Aorta (tissue), 5 donors: ENCODE measurements at regions of chr3 and their contacts with region 1.

Region 1: GRCh38 chr3:57169872-57170623 is 4.9 kb upstream of the IL17RD start:
- DNase-seq: peak; percentile 79 to 92
- ATAC-seq: peak; percentile 87
- H3K4me3 ChIP-seq: peak overlapping the region in 1 of 2 donors; percentile 24
- H3K27ac ChIP-seq: no peak overlapping the region
- H3K4me1 ChIP-seq: no peaks in the 10 kb centered on the region
- H3K27me3 ChIP-seq: no peaks in the 10 kb centered on the region

Region 2: DNA sequence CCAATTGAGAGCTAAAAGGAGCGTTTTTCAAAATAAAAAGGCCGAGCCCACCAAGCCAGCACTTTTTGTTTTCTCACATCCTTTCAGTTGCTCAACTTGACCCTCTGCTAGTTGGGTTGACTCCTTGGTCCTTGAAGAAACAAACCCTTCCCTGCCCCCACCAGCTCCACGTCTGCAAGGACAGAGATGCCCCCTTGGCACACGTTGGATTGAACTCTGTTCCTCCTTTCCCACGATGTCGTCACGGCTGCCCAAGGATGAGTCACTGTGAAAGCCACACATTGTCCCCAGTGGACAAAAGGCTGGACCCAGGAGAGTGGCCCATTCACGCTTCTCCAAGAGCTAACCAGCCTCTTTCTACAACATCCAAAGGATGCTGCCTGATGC is 152.6 kb before region 1 on chr3:
- intact Hi-C with region 1: loop called in 1 of 2 experiments (anchors 10 kb)
- DNase-seq: peak; percentile 71 to 80
- ATAC-seq: no peak
- H3K4me3 ChIP-seq: no peak overlapping the region
- H3K27ac ChIP-seq: no peak overlapping the region
- H3K4me1 ChIP-seq: no peaks in the 10 kb centered on the region
- H3K27me3 ChIP-seq: no peaks in the 10 kb centered on the region

Region 3: DNA sequence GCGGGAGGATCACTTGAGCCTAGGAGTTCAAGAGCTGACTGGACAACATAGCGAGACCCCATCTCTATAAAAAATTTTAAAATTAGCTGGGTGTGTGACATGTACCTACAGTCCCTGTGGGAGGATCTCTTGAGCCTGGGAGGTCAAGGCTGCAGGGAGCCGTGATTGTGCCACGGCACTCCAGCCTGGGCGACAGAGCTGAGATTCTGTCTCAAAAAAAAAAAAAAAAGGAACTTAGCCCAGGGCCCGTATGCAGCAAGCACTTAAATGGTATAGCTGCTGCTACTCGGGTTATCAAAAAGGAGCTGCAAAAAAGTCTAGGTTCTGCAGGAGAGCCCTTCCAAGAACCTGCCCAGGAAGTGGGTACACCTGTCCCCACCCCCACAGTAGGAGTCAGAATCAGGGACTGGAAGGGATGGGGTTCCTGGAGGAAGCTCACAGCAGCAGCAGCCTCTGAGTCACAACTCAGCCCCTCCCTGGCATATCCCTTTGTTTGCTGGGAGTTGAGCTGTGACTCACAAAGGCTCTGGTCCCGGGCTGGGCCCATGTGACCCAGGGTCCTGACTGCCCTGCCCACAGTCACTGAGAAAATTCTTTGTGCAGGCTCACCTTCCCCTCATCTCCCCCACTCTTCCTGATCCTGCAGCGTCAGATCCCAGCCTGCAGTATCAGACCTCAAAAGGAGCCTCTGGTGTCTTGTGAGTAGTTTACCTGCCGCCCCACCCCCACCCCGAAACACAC is 109.8 kb before region 1 on chr3 and contains the start of gene SPATA12:
- intact Hi-C with region 1: no loop called
- DNase-seq: peak; percentile 83 to 87
- ATAC-seq: peak; percentile 91
- H3K4me3 ChIP-seq: no peak within 1 kb of the TSS
- H3K27ac ChIP-seq: no peak within 1 kb of the TSS
- H3K4me1 ChIP-seq: no peaks in the 10 kb centered on the region
- H3K27me3 ChIP-seq: no peaks in the 10 kb centered on the region
- total RNA-seq, gene SPATA12: not detected

Region 4: DNA sequence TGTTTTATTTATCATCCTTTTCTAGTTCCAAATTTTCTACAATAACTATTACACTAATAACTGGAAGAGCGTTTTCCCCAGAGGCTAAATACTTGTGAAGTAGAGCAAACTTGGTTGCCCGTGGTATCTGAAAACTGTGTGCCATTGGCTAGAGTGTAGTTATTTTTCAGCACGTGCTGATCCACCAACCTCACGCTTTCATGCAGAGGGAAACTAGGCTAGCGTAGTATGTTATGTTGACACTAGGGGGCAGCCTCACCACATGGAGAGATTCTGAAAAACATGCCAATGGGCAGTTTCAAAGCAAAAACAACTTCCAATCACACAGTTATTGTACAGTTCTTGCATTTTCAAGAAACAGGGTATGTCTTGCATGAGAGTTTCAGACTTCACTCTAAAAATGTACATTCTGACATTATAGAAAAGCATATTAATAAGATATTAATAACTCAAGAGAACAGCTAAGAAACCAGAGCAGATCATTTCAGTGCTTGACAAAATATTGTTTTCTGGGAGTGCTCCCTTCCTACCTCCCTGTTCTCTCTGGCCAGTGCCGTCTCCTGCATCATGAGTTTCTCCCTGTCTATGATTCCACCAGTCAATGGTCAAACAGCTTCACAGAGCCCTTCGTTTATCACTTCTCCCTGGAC is 69.9 kb before region 1 on chr3:
- intact Hi-C with region 1: loop called in 1 of 2 experiments (anchors 5 kb)
- DNase-seq: peak in 1 of 2 donors; percentile 64
- ATAC-seq: peak; percentile 88
- H3K4me3 ChIP-seq: no peak overlapping the region
- H3K27ac ChIP-seq: no peak overlapping the region
- H3K4me1 ChIP-seq: no peaks in the 10 kb centered on the region
- H3K27me3 ChIP-seq: no peaks in the 10 kb centered on the region

Region 5: GRCh38 chr3:57234613-57235575 is 64.8 kb after region 1 on chr3:
- intact Hi-C with region 1: no loop called
- DNase-seq: no peak
- ATAC-seq: no peak
- H3K4me3 ChIP-seq: no peak overlapping the region
- H3K27ac ChIP-seq: no peak overlapping the region
- H3K4me1 ChIP-seq: peaks cover 0 to 1% of the 10 kb centered on the region in 2 donors
- H3K27me3 ChIP-seq: no peaks in the 10 kb centered on the region

Region 6: DNA sequence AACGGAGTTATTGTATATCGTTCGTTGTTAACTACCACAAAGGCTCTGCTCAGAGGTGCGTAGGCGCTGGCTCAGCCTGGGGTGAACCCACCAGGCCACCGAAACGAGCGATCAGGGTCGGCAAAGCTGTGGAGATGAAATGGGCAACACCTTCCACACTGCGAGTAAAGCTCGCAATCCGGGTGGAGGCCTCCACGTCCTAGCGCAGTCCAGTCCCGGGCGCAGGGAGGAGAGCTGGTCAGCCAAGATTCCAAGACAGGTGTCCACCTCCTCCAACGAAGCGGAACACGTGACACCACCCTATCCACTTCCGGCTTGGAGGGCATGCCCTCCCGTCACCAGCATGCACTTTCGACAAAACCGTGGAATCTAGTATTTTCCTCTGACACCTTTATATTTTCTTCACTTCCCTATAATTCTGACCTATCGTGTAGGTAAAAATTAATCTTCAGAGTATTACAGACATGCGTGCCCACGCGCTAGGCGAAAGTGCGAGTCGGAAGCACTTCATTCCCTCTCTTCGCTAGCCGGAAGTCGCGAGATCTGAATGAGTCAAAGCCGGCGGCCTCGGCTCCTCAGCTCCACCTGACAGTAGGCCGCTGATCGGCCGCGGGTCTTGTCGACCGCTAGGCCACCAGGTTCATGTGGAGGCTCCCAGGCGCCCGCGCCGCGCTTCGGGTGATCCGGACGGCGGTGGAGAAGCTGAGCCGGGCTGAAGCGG is 385.9 kb after region 1 on chr3 and contains the start of gene PDE12:
- intact Hi-C with region 1: loop called in 1 of 2 experiments (anchors 10 kb)
- DNase-seq: peak; percentile 92 to 94
- ATAC-seq: peak; percentile 97
- H3K4me3 ChIP-seq: peak within 1 kb of the TSS; percentile 85
- H3K27ac ChIP-seq: peak within 1 kb of the TSS; percentile 45 to 46
- H3K4me1 ChIP-seq: no peaks in the 10 kb centered on the region
- H3K27me3 ChIP-seq: no peaks in the 10 kb centered on the region
- total RNA-seq, gene PDE12: 14.8 to 15.4 TPM

Region 7: DNA sequence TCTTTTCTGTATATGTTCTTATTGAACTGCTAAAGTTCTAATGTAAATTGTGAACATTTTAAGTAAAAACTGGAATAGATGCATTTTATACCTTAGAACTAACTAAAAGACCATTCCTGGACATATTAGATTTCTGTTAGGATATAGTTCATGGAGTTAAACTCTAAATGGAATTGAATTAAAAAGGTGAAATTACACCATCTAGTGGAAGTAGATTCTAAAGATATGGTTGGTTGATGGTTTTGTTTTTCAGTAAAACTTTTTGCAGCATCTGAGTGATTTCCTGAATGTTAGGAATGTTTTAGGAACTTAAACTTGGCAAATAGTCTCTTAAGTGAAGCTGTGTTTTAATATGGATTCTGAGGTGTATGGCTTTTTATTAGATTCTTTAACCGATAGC is 682.8 kb after region 1 on chr3:
- intact Hi-C with region 1: loop called in 1 of 2 experiments (anchors 10 kb)
- DNase-seq: no peak
- ATAC-seq: no peak
- H3K4me3 ChIP-seq: no peak overlapping the region
- H3K27ac ChIP-seq: no peak overlapping the region
- H3K4me1 ChIP-seq: no peaks in the 10 kb centered on the region
- H3K27me3 ChIP-seq: no peaks in the 10 kb centered on the region